Activated naive CD4-positive, alpha-beta T cell treated with anti-CD3 and anti-CD28 coated beads for 36 hours (primary cell): ENCODE measurements at regions of chr3 and their contacts with region 1.

Region 1: GRCh38 chr3:58305882-58306711 is at the starts of genes HTD2 and RPP14:
- DNase-seq: peak; percentile 99
- H3K4me3 Mint-ChIP-seq: peak within 1 kb of the TSS; percentile 99
- H3K27ac Mint-ChIP-seq: peak within 1 kb of the TSS; percentile 96
- H3K4me1 Mint-ChIP-seq: peaks cover 26% of the 10 kb centered on the region
- H3K27me3 Mint-ChIP-seq: peaks cover 5% of the 10 kb centered on the region
- total RNA-seq, gene HTD2: 6.9 to 8.1 TPM
- total RNA-seq, gene RPP14: 12.1 to 14.4 TPM

Region 2: DNA sequence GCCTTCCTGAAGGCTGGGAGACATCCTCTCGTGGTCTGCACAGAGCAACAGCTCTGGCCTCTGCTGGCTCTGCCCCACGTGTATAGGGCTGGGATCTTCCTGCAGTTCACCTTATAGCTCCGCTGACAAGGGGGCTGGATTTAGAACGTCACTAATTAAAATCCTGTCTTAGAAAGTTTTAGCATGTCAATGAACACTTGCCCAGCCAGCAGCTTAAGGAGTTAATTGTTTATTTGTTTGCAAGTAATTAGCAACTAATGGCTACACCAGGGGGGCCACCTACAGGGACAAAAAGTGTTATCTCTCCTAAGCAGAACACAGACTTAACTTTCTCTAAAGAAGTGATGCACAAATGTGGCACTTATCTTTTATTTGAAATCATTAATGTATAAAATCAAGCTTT is 1106.2 kb before region 1 on chr3 and contains the start of gene HESX1:
- CTCF ChIA-PET with region 1: no interaction called
- intact Hi-C with region 1: no loop called
- DNase-seq: no peak
- H3K4me3 Mint-ChIP-seq: no peak within 1 kb of the TSS
- H3K27ac Mint-ChIP-seq: no peak within 1 kb of the TSS
- H3K4me1 Mint-ChIP-seq: no peaks in the 10 kb centered on the region
- H3K27me3 Mint-ChIP-seq: no peaks in the 10 kb centered on the region
- total RNA-seq, gene HESX1: 1.5 to 1.6 TPM

Region 3: GRCh38 chr3:57715686-57716085 is 590.4 kb before region 1 on chr3:
- CTCF ChIA-PET with region 1: no interaction called
- intact Hi-C with region 1: no loop called
- DNase-seq: no peak
- H3K4me3 Mint-ChIP-seq: no peak overlapping the region
- H3K27ac Mint-ChIP-seq: no peak overlapping the region
- H3K4me1 Mint-ChIP-seq: no peaks in the 10 kb centered on the region
- H3K27me3 Mint-ChIP-seq: no peaks in the 10 kb centered on the region

Region 4: GRCh38 chr3:57803647-57804081 is 502.4 kb before region 1 on chr3:
- CTCF ChIA-PET with region 1: no interaction called
- intact Hi-C with region 1: no loop called
- DNase-seq: no peak
- H3K4me3 Mint-ChIP-seq: peak overlapping the region; percentile 3
- H3K27ac Mint-ChIP-seq: peak overlapping the region; percentile 33
- H3K4me1 Mint-ChIP-seq: peaks cover 70% of the 10 kb centered on the region
- H3K27me3 Mint-ChIP-seq: no peaks in the 10 kb centered on the region

Region 5: DNA sequence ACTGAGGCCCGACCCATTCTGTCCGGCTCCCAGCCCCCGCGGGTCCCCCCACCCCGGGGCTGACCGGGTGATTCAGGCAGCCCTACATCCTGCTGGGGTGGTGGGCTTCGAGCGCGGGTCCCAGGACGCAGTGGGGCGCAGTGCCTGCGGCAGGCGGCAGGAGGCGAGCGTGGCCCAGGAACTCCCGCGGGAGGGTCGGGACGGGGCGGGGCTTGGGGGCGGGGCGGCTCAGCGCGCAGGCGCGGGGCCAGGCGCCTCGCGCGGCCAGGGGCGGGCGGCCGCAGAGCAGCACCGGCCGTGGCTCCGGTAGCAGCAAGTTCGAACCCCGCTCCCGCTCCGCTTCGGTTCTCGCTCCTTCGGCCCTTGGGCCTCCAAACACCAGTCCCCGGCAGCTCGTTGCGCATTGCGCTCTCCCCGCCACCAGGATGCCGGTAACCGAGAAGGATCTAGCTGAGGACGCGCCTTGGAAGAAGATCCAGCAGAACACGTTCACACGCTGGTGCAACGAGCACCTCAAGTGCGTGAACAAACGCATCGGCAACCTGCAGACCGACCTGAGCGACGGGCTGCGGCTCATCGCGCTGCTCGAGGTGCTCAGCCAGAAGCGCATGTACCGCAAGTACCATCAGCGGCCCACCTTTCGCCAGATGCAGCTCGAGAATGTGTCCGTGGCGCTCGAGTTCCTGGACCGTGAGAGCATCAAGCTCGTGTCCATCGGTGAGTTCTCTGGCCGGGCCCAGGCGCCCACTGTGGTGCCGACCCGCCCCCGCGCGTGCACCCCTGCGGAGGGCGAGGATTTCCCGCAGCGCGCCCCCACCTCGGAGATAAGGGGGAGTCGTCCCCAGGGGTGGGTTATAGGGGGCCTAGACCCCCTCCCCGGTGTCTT is 297.7 kb before region 1 on chr3 and contains the start of gene FLNB:
- CTCF ChIA-PET with region 1: interaction called, 6 read pairs
- intact Hi-C with region 1: loop called (anchors 1 kb)
- DNase-seq: peak; percentile 81
- H3K4me3 Mint-ChIP-seq: peak within 1 kb of the TSS; percentile 92
- H3K27ac Mint-ChIP-seq: peak within 1 kb of the TSS; percentile 74
- H3K4me1 Mint-ChIP-seq: peaks cover 37% of the 10 kb centered on the region
- H3K27me3 Mint-ChIP-seq: no peaks in the 10 kb centered on the region
- total RNA-seq, gene FLNB: 47.7 to 48.0 TPM

Region 6: DNA sequence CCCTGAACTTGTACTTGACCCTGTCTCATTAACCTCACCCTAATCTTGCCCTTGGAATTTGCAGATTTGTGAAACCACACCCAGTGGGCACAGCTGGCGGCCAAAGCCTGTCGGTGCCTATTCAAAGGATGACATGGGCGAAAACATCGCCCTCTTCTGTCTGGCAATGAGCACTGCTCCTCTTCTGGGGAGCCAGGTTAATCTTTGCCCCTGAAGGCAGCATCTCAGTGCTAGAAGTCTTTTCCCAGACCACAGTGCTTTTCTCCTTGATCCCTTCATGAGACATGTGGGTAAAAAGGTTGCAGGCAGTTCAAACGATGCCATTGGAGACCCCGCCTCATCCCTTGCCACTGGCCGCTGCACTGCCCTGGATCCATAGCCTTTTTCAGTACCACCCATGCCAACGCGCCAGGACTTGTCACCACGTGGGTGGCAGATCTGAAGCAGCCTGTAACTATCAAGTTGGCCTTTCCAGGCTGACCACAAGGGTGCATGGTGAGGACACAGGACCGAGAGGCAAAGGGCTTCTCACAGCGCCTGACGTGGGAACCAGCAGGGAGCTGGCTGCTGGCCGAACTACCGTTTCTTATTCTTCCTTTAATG is 88.8 kb before region 1 on chr3:
- CTCF ChIA-PET with region 1: interaction called, 12 read pairs
- intact Hi-C with region 1: loop called (anchors 1 kb)
- DNase-seq: peak; percentile 73
- H3K4me3 Mint-ChIP-seq: no peak overlapping the region
- H3K27ac Mint-ChIP-seq: no peak overlapping the region
- H3K4me1 Mint-ChIP-seq: peaks cover 33% of the 10 kb centered on the region
- H3K27me3 Mint-ChIP-seq: no peaks in the 10 kb centered on the region

Region 7: DNA sequence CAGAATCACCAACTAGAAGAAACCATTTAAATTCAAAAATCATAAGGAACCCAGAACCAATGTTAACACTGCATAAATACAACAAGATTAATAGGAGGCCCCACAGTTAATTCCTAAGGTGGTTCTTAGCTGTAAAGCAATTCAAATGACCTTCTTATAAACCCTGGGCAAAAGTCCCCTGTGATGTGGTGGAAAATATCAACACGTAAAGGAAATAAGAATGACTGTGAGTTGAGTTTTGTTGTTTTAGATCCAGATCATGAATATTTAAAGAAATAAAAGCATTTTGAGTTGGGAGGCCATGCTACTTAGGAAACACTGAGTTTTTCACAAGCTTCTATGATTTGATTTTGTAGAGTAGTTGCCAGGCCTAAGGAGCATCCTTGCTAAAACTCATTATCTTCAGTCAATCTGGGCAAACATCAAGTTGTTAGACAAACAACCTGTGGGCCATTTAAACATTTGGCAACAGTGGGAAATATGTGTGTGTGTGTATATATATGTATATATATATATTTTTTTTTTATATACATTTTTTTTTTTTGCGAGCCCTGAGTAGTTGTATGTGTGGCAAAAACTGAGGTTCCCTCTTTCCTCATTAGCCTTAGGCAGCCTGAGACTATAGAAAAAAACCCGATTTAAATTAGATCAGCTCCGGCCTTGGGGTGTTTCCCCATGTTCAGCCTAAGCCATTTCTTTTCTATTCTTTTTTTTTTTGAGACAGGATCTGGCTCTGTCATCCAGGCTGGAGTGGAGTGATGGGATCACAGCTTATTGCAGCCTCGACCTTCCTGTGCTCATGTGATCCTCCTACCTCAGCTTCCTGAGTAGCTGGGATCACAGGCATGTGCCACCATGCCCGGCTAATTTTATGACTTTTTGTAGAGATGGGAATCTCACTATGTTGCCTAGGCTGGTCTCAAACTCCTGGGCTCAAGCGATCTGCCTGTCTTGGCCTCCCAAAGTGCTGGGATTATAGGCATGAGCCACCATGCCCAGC is 18.6 kb after region 1 on chr3:
- CTCF ChIA-PET with region 1: interaction called, 36 read pairs
- intact Hi-C with region 1: loop called (anchors 1 kb)
- DNase-seq: peak; percentile 21
- H3K4me3 Mint-ChIP-seq: peak overlapping the region; percentile 16
- H3K27ac Mint-ChIP-seq: peak overlapping the region; percentile 89
- H3K4me1 Mint-ChIP-seq: peaks cover 42% of the 10 kb centered on the region
- H3K27me3 Mint-ChIP-seq: no peaks in the 10 kb centered on the region

Region 8: GRCh38 chr3:58433400-58434169 is 127.5 kb after region 1 on chr3 and contains the start of gene PDHB:
- CTCF ChIA-PET with region 1: interaction called, 8 read pairs
- intact Hi-C with region 1: loop called (anchors 1 kb)
- DNase-seq: peak; percentile 89
- H3K4me3 Mint-ChIP-seq: peak within 1 kb of the TSS; percentile 91
- H3K27ac Mint-ChIP-seq: peak within 1 kb of the TSS; percentile 92
- H3K4me1 Mint-ChIP-seq: peaks cover 20% of the 10 kb centered on the region
- H3K27me3 Mint-ChIP-seq: no peaks in the 10 kb centered on the region
- total RNA-seq, gene PDHB: 51.6 to 53.7 TPM

Region 9: DNA sequence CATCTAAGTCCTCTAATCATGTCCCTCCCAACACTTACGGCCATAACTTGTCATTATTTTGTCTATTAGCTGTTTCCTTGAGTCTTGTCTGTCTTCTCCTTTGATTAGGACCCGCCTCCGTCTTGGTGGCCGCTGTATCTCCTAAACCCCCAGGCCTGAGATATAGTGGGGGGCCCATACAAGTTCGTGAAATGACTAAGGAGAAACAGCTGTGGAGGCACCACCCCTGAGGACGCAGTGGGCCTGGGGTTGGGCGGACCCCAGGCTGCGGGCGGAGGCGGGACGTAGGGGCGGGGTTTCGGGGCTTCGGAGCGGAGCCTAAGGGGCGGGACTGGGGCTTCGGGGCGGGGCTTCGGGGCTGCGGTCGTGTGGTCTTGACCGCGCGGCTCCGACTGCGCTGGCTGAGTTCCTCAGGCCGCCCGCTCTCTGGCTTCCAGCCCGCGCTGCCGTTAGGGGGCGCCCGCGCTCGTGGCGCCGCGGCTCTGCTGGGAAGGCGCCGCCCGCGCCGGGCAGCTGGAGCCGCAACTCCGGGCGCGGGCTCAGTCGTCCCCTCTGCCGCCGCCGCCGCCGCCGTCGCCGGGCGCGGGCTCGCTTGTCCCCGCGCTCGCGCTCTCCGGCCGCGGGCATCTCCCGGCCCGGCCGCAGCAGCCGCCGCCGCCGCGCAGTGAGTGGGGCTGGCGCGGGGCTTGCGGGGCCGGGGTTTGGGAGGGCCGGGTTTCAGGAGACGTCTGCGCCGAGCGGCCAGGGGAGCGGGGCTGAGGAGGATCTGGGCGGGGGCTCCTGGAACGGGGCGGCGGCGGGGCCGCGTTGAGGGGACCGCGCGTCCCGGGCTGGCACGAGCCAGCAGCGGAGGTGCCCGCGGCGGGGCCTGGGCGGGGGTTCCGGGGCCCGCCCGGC is 185.7 kb after region 1 on chr3 and contains the start of gene KCTD6:
- CTCF ChIA-PET with region 1: interaction called, 33 read pairs
- intact Hi-C with region 1: loop called (anchors 1 kb)
- DNase-seq: peak; percentile 83
- H3K4me3 Mint-ChIP-seq: peak within 1 kb of the TSS; percentile 88
- H3K27ac Mint-ChIP-seq: peak within 1 kb of the TSS; percentile 80
- H3K4me1 Mint-ChIP-seq: peaks cover 47% of the 10 kb centered on the region
- H3K27me3 Mint-ChIP-seq: no peaks in the 10 kb centered on the region
- total RNA-seq, gene KCTD6: 8.4 to 9.9 TPM

Region 10: DNA sequence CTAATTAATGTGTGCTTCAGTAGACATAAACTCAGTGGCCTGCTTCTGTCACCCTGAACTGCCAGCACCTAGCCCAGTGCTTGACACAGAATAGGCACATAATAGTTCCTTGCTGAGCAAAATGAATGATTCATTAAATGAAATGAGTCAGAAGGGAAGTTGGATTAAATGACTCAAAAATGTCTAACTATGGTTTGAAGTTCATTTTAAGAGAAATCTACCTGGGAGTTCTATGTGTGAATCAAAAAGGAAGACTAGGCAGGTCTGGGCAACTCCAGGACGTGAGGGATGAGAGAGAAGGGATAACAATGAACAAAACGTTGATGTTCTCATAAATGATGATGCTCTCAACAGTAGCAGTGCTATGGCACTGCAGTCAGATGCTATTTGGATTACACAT is 568.7 kb after region 1 on chr3:
- CTCF ChIA-PET with region 1: no interaction called
- intact Hi-C with region 1: loop called (anchors 5 kb)
- DNase-seq: peak; percentile 46
- H3K4me3 Mint-ChIP-seq: no peak overlapping the region
- H3K27ac Mint-ChIP-seq: peak overlapping the region; percentile 77
- H3K4me1 Mint-ChIP-seq: peaks cover 15% of the 10 kb centered on the region
- H3K27me3 Mint-ChIP-seq: peaks cover 16% of the 10 kb centered on the region